Activated CD4-positive, alpha-beta memory T cell treated with anti-CD3 and anti-CD28 coated beads, Interleukin-2, amount 10 ng/mL, durations not matched to agents 7 days and 5 days (primary cell): ENCODE measurements at regions of chr12 and their contacts with region 1.

Region 1: GRCh38 chr12:2877047-2877952 is at the starts of genes FOXM1 and RHNO1:
- DNase-seq: peak; percentile 91
- H3K4me3 Mint-ChIP-seq: peak within 1 kb of the TSS; percentile 83
- H3K27ac Mint-ChIP-seq: peak within 1 kb of the TSS; percentile 90
- H3K4me1 Mint-ChIP-seq: peaks cover 54% of the 10 kb centered on the region
- H3K27me3 Mint-ChIP-seq: no peaks in the 10 kb centered on the region
- total RNA-seq, gene FOXM1: 102 to 109 TPM
- total RNA-seq, gene RHNO1: 65.3 to 70.6 TPM

Region 2: GRCh38 chr12:2691006-2691344 is 186.3 kb before region 1 on chr12:
- CTCF ChIA-PET with region 1: interaction called, 5 read pairs
- POLR2A ChIA-PET with region 1: interaction called, 25 read pairs
- DNase-seq: peak; percentile 65
- H3K4me3 Mint-ChIP-seq: peak overlapping the region; percentile 82
- H3K27ac Mint-ChIP-seq: peak overlapping the region; percentile 85
- H3K4me1 Mint-ChIP-seq: peaks cover 29% of the 10 kb centered on the region
- H3K27me3 Mint-ChIP-seq: peaks cover 19% of the 10 kb centered on the region

Region 3: GRCh38 chr12:2794736-2795289 is 82.5 kb before region 1 on chr12 and contains the start of gene FKBP4:
- CTCF ChIA-PET with region 1: no interaction called
- POLR2A ChIA-PET with region 1: interaction called, 11 read pairs
- DNase-seq: peak; percentile 90
- H3K4me3 Mint-ChIP-seq: peak within 1 kb of the TSS; percentile 90
- H3K27ac Mint-ChIP-seq: peak within 1 kb of the TSS; percentile 66
- H3K4me1 Mint-ChIP-seq: peaks cover 21% of the 10 kb centered on the region
- H3K27me3 Mint-ChIP-seq: peaks cover 17% of the 10 kb centered on the region
- total RNA-seq, gene FKBP4: 62.6 to 70.7 TPM

Region 4: DNA sequence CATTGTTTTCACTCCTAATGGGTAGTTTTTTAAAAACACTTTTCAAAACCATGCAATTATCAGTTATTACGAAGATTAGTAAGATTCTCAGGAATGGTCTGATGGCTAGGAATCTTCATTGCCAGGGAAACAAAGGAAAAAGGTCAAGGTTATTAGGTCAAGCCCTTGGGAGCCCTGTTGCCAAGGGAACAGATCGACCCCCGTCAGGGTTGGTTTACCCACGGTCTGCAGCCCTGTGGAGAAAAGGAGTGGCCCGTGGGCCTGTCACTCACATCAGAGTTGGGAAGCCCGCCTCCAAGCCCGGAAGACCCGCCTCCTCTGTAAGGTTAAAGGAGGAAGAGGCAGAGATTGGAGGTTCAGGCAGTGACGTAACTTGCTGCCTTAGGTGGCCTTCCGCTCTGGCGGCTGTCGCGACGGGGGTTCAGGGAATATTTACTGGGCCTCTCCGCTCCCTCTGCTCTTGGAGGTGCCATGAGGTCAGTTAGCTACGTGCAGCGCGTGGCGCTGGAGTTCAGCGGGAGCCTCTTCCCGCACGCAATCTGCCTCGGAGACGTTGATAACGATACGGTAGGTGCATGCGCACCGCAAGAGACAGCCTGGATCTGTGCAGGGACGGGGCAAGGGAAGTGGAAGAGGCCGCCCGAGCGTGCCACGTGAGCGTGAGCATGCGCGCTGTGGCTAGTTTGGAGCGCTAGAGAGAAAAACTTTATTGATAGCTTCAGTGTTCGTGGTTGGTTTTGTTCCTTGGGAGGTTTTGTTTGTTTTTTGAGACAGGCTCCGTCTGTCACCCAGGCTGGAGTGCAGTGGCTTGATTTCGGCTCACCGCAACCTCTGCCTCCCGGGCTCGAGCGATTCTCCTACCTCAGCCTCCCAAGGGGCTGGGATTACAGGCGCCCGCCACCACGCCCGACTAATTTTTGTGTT is 64.7 kb before region 1 on chr12 and contains the start of gene ITFG2:
- CTCF ChIA-PET with region 1: no interaction called
- POLR2A ChIA-PET with region 1: interaction called, 14 read pairs
- DNase-seq: peak; percentile 98
- H3K4me3 Mint-ChIP-seq: peak within 1 kb of the TSS; percentile 99
- H3K27ac Mint-ChIP-seq: peak within 1 kb of the TSS; percentile 97
- H3K4me1 Mint-ChIP-seq: peaks cover 27% of the 10 kb centered on the region
- H3K27me3 Mint-ChIP-seq: no peaks in the 10 kb centered on the region
- total RNA-seq, gene ITFG2: 25.9 to 29.5 TPM

Region 5: DNA sequence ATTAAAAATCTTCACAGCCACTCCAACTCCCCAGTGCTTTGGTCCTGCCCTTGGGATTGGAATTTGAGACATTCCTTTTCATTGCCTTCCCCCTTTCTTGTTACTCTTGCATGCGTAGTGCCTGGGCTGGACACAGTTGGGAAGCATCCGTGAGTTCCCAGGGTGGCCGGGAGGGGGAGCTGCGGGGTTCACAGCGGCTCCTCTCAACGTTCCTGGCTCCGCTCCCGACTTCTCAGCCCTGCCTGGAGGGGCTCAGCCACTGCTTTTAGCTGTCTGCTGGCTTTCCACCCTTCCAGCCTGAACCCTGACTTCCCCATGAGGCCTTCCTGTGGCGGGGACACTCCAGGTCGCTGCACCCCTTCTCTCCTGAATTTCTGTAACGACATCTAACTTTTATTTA is 23.7 kb before region 1 on chr12:
- CTCF ChIA-PET with region 1: interaction called, 5 read pairs
- POLR2A ChIA-PET with region 1: interaction called, 10 read pairs
- DNase-seq: peak; percentile 52
- H3K4me3 Mint-ChIP-seq: no peak overlapping the region
- H3K27ac Mint-ChIP-seq: no peak overlapping the region
- H3K4me1 Mint-ChIP-seq: no peaks in the 10 kb centered on the region
- H3K27me3 Mint-ChIP-seq: no peaks in the 10 kb centered on the region

Region 6: DNA sequence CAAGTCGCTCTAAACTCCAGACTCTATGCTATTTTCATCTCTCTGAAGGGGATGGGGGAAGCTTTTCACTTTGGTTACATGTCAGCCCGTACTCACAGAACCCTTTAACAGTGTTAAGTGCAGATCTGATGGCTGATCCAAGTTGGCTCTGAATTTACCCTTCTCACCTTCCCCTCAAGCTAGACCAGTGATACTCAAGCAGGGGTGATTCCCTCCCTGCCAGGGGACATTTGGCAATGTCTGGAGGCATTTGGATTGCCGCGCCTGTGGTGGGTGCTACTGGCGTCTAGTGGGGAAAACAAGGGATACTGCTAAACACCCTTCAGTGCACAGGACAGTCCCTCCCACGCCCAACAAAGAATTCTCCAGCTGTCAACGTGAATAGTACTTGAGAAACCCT is 14.4 kb before region 1 on chr12:
- CTCF ChIA-PET with region 1: interaction called, 6 read pairs
- POLR2A ChIA-PET with region 1: interaction called, 37 read pairs
- DNase-seq: no peak
- H3K4me3 Mint-ChIP-seq: no peak overlapping the region
- H3K27ac Mint-ChIP-seq: no peak overlapping the region
- H3K4me1 Mint-ChIP-seq: peaks cover 5% of the 10 kb centered on the region
- H3K27me3 Mint-ChIP-seq: no peaks in the 10 kb centered on the region

Region 7: DNA sequence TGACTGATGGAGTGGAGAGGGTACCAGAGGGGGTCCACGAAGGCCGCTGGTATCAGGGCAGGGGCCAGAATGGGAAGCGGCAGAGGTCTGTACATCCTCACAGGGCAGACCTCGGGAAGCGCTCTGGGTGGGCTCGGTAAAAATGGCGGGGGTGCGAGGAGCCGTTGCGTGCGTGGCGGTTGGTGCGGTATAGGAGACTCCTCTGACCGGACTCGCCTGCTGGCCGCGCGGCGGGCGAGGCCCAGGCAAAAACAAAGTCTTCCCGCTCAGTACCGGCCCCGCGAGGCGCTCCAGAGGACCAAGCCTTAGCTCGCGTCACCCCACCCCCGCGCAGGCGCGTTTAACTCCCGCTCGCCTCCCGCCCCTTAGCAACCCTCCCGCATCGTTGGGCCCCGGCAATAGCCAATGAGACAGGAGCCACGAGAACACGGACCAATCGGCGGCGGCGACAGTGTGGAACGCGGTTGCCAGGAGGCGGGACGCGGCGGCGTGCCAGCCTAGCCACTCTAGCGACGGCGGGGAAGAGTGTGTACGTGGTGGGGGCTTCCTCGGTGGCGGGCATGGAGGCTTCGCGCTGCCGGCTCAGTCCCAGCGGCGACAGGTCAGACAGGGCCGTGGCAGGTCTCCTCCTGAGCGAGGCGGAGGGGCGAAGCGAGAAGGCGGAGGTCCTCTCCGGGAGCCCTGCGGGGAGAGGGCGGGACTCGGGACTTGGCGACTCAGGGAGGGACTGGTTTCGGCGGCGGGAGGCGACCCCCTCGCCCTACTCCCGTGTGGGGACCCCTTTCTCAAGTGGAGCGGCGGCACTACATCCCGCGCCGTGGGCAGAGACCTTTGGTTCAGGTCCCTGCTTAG is 13.3 kb after region 1 on chr12 and contains the start of gene TULP3:
- CTCF ChIA-PET with region 1: interaction called, 17 read pairs
- POLR2A ChIA-PET with region 1: interaction called, 99 read pairs
- DNase-seq: peak; percentile 98
- H3K4me3 Mint-ChIP-seq: peak within 1 kb of the TSS; percentile 87
- H3K27ac Mint-ChIP-seq: peak within 1 kb of the TSS; percentile 82
- H3K4me1 Mint-ChIP-seq: peaks cover 42% of the 10 kb centered on the region
- H3K27me3 Mint-ChIP-seq: no peaks in the 10 kb centered on the region
- total RNA-seq, gene TULP3: 8.4 to 8.8 TPM